Mammary epithelial cell (primary cell): ENCODE measurements at regions of chr2 and their contacts with region 1.

Region 1: DNA sequence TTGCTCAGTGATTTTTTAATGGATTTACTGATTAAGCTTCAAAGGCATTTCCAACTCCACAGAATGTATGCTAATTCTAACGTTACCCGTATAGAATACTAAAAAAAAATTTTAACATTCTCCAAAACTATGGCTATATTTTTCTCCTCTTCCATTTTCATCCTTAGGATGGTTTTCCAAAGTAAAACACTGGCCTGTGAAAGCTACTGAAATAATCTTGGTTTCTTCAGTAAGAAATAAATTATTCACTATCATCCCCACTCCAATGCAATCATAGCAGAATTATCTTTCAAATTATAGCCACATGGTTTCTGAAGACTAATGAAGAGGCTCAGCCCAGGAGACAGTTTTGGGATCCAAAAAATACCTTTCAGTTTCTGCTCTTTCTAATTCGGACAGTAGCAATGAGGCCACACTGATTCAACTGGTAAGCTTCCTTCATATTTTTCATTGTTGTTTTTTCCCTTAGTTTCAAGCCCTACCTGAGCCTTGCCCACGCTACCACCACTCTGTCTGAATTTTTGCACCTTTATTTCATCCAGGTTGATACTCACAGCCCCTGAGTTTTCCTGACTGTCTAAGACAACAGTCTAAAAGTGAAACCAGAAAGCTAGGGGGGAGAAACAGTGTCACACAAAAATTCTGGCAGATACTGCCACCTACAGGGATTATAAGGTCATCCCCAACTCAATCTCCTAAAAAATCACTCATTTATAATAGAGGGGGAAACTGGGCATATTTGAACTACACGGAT is 887.9 kb downstream of the NRXN1 start:
- DNase-seq: peak; percentile 41
- H3K4me3 ChIP-seq: peak overlapping the region; percentile 32 to 44 (median 35)
- H3K27ac ChIP-seq: no peak overlapping the region
- H3K4me1 ChIP-seq: no peaks in the 10 kb centered on the region
- H3K27me3 ChIP-seq: peaks cover 2% of the 10 kb centered on the region
- CTCF ChIP-seq: peak; percentile 57 to 67

Region 2: GRCh38 chr2:48600204-48600813 is 1543.7 kb before region 1 on chr2:
- CTCF ChIA-PET with region 1: no interaction called
- dilution Hi-C with region 1: no loop called
- in situ Hi-C with region 1: no loop called
- intact Hi-C with region 1: loop called (anchors 2 kb)
- DNase-seq: peak; percentile 32
- H3K4me3 ChIP-seq: no peak overlapping the region
- H3K27ac ChIP-seq: no peak overlapping the region
- H3K4me1 ChIP-seq: no peaks in the 10 kb centered on the region
- H3K27me3 ChIP-seq: no peaks in the 10 kb centered on the region
- CTCF ChIP-seq: peak; percentile 69 to 78

Region 3: GRCh38 chr2:49255409-49255971 is 888.5 kb before region 1 on chr2:
- CTCF ChIA-PET with region 1: no interaction called
- dilution Hi-C with region 1: no loop called
- in situ Hi-C with region 1: no loop called
- intact Hi-C with region 1: loop called (anchors 5 kb)
- DNase-seq: no peak
- H3K4me3 ChIP-seq: no peak overlapping the region
- H3K27ac ChIP-seq: no peak overlapping the region
- H3K4me1 ChIP-seq: no peaks in the 10 kb centered on the region
- H3K27me3 ChIP-seq: peaks cover 2% of the 10 kb centered on the region
- CTCF ChIP-seq: peak in 1 of 2 donors; percentile 1

Region 4: GRCh38 chr2:49687918-49688317 is 456.1 kb before region 1 on chr2:
- CTCF ChIA-PET with region 1: no interaction called
- dilution Hi-C with region 1: no loop called
- in situ Hi-C with region 1: no loop called
- intact Hi-C with region 1: loop called (anchors 1 kb)
- DNase-seq: no peak
- H3K4me3 ChIP-seq: no peak overlapping the region
- H3K27ac ChIP-seq: no peak overlapping the region
- H3K4me1 ChIP-seq: no peaks in the 10 kb centered on the region
- H3K27me3 ChIP-seq: no peaks in the 10 kb centered on the region
- CTCF ChIP-seq: peak; percentile 21 to 40

Region 5: GRCh38 chr2:50014168-50014567 is 129.8 kb before region 1 on chr2:
- CTCF ChIA-PET with region 1: no interaction called
- dilution Hi-C with region 1: no loop called
- in situ Hi-C with region 1: no loop called
- intact Hi-C with region 1: no loop called
- DNase-seq: no peak
- H3K4me3 ChIP-seq: no peak overlapping the region
- H3K27ac ChIP-seq: no peak overlapping the region
- H3K4me1 ChIP-seq: no peaks in the 10 kb centered on the region
- H3K27me3 ChIP-seq: no peaks in the 10 kb centered on the region
- CTCF ChIP-seq: no peak

Region 6: GRCh38 chr2:50401772-50402653 is 258.0 kb after region 1 on chr2:
- CTCF ChIA-PET with region 1: no interaction called
- dilution Hi-C with region 1: no loop called
- in situ Hi-C with region 1: no loop called
- intact Hi-C with region 1: loop called (anchors 5 kb)
- DNase-seq: peak; percentile 32
- H3K4me3 ChIP-seq: no peak overlapping the region
- H3K27ac ChIP-seq: no peak overlapping the region
- H3K4me1 ChIP-seq: no peaks in the 10 kb centered on the region
- H3K27me3 ChIP-seq: no peaks in the 10 kb centered on the region
- CTCF ChIP-seq: peak; percentile 89 to 98